ENCODE measurements at regions of chr7 and their contacts with region 1.

Region 1: DNA sequence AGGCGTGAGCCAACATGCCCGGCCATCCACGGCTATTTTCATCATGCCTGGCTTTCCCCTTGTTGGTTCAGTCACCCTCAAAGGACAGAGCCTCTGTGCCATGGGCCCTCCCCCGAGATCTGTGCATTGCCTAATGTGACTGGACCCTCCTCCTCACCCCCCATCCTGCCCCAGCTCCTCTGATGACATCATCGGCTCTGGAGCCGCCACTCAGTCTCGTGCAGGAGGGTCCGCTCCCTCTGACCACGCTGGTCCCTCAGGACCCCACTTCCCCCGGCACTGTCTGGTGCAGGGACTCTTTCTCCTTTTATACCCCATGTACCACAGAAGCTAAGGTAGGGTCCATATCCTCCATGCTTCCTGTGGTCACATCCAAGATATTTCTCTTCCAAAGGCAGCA is 33.2 kb upstream of the BAIAP2L1 start:
- DNase-seq: no peak

Region 2: GRCh38 chr7:98745722-98746318 is 311.7 kb after region 1 on chr7:
- intact Hi-C with region 1: loop called (anchors 2 kb)
- DNase-seq: no peak

Region 3: DNA sequence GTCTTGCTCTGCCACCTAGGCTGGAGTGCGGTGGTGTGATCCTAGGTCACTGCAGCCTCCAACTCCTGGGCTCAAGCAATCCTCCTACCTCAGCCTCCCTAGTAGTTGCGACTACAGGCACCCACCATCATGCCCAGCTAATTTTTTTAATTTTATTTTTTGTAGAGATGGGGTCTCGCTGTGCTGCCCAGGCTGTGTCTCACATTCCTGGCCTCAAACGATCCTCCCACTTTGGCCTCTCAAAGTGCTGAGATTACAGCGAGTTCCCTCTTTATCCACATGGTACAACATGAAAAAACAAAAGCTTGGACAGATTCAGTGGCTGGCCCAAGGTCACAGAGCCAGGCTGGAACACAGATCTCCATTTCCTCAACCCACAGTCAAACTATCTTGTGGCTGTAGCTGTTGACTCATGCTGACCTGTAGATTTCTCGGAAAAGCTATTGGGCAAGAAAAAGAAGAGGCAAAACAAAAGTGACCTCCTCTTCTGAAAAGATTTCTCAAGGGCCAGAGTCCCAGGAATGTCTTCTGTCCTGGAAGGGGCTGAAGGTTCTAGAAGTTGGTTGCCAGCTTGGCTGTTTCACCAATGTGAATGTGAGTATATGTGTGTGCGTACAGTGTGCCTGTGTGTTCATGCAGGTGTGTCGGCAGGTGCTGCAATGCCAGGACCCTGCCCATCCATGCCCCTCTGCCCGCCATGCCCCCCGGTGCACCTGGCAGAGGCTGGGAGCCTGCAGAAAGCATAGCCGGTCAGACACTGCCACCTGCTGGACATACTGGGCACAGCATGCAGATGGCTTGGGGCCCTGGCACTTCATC is 407.3 kb after region 1 on chr7:
- intact Hi-C with region 1: loop called (anchors 2 kb)
- DNase-seq: peak; percentile 83